ENCODE measurements at regions of chr1 and their contacts with region 1.

Region 1: GRCh38 chr1:17574516-17574915 is 35.0 kb downstream of the ARHGEF10L start:
- DNase-seq: peak; percentile 49 to 59
- H3K4me3 ChIP-seq: no peak overlapping the region
- H3K4me3 Mint-ChIP-seq: no peak overlapping the region
- H3K27ac Mint-ChIP-seq: peak overlapping the region; percentile 65
- H3K4me1 ChIP-seq: peaks cover 34% of the 10 kb centered on the region
- H3K4me1 Mint-ChIP-seq: peaks cover 21% of the 10 kb centered on the region
- H3K27me3 ChIP-seq: no peaks in the 10 kb centered on the region
- H3K27me3 Mint-ChIP-seq: no peaks in the 10 kb centered on the region
- CTCF ChIP-seq: peak; percentile 37 to 51

Region 2: DNA sequence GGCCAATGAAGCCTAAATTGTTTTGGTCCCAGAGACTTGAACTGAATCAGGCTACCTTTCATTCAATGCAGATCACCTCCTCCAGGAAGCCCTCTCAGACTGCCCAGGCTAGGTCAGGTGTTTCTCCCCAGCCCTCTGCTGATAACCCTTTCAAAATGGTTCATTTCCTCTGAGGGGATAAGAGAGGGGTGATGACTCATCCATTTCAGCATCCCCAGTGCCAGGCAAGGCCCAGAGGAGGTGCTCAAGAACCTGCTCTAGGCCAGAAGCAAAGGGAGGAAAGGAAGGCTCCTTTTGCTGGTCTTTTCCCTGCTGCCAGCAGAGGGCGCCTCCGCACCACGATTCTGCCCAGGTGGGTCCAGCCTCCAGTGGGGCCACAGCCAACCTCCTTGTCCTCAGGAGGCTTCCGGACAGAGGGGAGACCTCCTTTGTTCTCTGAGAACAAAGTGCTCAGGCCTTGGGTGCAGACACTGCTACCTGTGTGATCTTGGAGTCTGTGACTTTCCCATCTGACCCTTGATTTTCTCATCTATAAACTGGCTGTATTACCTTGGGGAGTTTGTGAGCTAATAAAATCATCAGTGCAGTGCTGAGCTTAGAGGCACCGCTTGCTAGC is 80.3 kb before region 1 on chr1:
- CTCF ChIA-PET with region 1: interaction called, 4 read pairs
- POLR2A ChIA-PET with region 1: no interaction called
- intact Hi-C with region 1: loop called (anchors 2 kb)
- DNase-seq: peak; percentile 74 to 81
- H3K4me3 ChIP-seq: no peak overlapping the region
- H3K4me3 Mint-ChIP-seq: no peak overlapping the region
- H3K27ac Mint-ChIP-seq: no peak overlapping the region
- H3K4me1 ChIP-seq: 0 out of 2 replicates have a peak, but pooled peaks cover 7% of the 10 kb centered on the region
- H3K4me1 Mint-ChIP-seq: peaks cover 7% of the 10 kb centered on the region
- H3K27me3 ChIP-seq: no peaks in the 10 kb centered on the region
- H3K27me3 Mint-ChIP-seq: no peaks in the 10 kb centered on the region
- CTCF ChIP-seq: peak; percentile 74 to 84

Region 3: GRCh38 chr1:17587989-17588685 is 13.6 kb after region 1 on chr1:
- CTCF ChIA-PET with region 1: interaction called, 30 read pairs
- POLR2A ChIA-PET with region 1: interaction called, 7 read pairs
- intact Hi-C with region 1: no loop called
- DNase-seq: peak; percentile 92 to 94
- H3K4me3 ChIP-seq: peak overlapping the region; percentile 18; the same call in 1 of the 2 replicates
- H3K4me3 Mint-ChIP-seq: peak overlapping the region; percentile 69
- H3K27ac Mint-ChIP-seq: peak overlapping the region; percentile 86
- H3K4me1 ChIP-seq: peaks cover 55% of the 10 kb centered on the region
- H3K4me1 Mint-ChIP-seq: peaks cover 41% of the 10 kb centered on the region
- H3K27me3 ChIP-seq: no peaks in the 10 kb centered on the region
- H3K27me3 Mint-ChIP-seq: no peaks in the 10 kb centered on the region
- CTCF ChIP-seq: no peak

Measured in Caco-2 (cell line).